Activated B cell treated with CpG ODN at 0.5 μM for 24 hours (primary cell): ENCODE measurements at regions of chr15 and their contacts with region 1.

Region 1: DNA sequence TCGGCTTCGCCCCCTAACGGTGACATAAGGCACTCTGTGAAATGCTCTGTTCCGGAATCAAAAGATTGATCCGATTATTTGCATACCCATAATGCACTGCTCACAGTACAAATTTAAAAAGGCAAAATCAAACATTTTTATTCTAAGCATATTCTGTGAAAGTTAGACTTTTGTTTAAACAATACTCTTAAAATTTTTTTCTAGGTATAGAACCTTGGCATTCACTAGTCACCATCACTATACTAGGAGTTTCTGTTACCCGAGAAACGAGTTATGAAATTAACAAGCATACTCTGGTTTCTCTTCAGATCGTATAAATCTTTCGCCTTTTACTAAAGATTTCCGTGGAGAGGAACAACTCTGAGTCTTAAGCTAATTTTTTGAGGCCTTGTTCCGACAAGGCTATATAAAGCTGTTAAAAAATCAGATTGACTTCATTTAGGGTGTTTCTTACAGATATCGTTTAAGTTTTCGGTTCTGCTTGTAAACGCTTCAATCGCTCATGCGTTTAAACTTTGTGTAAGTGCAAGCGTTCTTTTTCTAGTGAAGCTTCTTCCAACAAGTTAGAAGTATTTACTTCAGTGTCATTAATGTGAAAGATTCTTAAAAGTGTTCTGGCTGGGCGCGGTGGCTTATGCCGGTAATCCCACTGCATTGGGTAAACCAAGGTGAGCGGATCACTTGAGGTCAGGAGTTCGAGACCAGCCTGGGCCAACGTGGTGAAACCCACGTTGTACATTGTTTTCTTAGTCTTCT is at the start of gene RNU5B-1:
- DNase-seq: peak; percentile 71
- ATAC-seq: peak; percentile 78
- H3K4me3 Mint-ChIP-seq: peak within 1 kb of the TSS; percentile 96
- H3K27ac Mint-ChIP-seq: peak within 1 kb of the TSS; percentile 97
- H3K4me1 Mint-ChIP-seq: peaks cover 37% of the 10 kb centered on the region
- H3K27me3 Mint-ChIP-seq: no peaks in the 10 kb centered on the region
- CTCF ChIP-seq: no peak
- total RNA-seq, gene RNU5B-1: 32.5 TPM in 1 of 2 replicates, not detected in the other

Region 2: GRCh38 chr15:64387562-64388168 is 916.9 kb before region 1 on chr15 and contains the start of gene TRIP4:
- CTCF ChIA-PET with region 1: no interaction called
- POLR2A ChIA-PET with region 1: no interaction called
- intact Hi-C with region 1: loop called (anchors 10 kb)
- DNase-seq: peak; percentile 92
- ATAC-seq: peak; percentile 100
- H3K4me3 Mint-ChIP-seq: peak within 1 kb of the TSS; percentile 98
- H3K27ac Mint-ChIP-seq: peak within 1 kb of the TSS; percentile 94
- H3K4me1 Mint-ChIP-seq: peaks cover 25% of the 10 kb centered on the region
- H3K27me3 Mint-ChIP-seq: no peaks in the 10 kb centered on the region
- CTCF ChIP-seq: no peak
- total RNA-seq, gene TRIP4: 26.3 and 35.0 TPM in 2 replicates

Region 3: DNA sequence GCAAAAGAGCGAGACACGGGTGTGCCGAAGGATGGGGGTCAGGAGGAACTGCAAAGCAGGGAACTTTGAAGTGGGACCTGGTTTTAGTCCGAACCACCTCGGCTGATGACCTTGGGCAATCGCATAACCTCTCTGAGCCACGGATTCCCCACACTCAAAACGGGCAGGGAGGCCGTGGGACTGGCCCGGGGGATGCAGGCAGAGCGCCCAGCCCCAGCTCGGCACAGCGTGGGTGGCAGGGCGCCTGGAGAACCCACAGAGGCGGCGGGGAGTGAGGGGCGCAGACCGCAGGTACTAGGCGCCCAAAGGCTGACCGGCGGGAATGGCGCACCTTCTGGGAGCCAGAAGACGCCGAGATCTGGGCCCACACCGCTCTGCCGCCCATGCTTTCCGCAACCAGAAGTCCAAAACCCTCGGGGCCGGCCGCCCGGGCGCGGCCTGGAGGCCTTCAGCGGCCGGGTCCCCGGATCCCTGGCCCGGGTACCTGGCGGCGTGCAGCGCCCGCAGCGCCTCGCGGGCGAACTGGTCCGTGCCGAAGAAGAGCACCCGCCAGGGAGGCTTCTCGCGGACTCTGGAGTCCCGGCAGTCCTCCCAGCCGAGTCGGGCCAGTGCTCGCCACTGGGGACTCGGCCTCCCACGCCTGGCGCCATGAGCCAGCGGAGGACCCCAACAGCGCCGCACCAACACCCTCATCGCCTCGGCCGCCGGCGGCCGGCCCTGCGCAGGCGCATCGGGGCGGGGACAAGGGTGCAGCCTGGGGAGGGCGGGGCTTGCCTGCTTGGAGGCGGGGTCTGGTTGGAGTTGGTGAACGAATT is 275.4 kb before region 1 on chr15 and contains the start of gene MTFMT:
- CTCF ChIA-PET with region 1: interaction called, 4 read pairs
- POLR2A ChIA-PET with region 1: interaction called, 5 read pairs
- intact Hi-C with region 1: loop called (anchors 1 kb)
- DNase-seq: peak; percentile 91
- ATAC-seq: peak; percentile 96
- H3K4me3 Mint-ChIP-seq: peak within 1 kb of the TSS; percentile 85
- H3K27ac Mint-ChIP-seq: peak within 1 kb of the TSS; percentile 13
- H3K4me1 Mint-ChIP-seq: peaks cover 23% of the 10 kb centered on the region
- H3K27me3 Mint-ChIP-seq: peaks cover 7% of the 10 kb centered on the region
- CTCF ChIP-seq: no peak
- total RNA-seq, gene MTFMT: 9.8 and 13.5 TPM in 2 replicates

Region 4: GRCh38 chr15:65133548-65134200 is 170.9 kb before region 1 on chr15 and contains the start of gene PDCD7:
- CTCF ChIA-PET with region 1: no interaction called
- POLR2A ChIA-PET with region 1: interaction called, 5 read pairs
- intact Hi-C with region 1: loop called (anchors 1 kb)
- DNase-seq: peak; percentile 70
- ATAC-seq: peak; percentile 95
- H3K4me3 Mint-ChIP-seq: peak within 1 kb of the TSS; percentile 89
- H3K27ac Mint-ChIP-seq: peak within 1 kb of the TSS; percentile 84
- H3K4me1 Mint-ChIP-seq: peaks cover 28% of the 10 kb centered on the region
- H3K27me3 Mint-ChIP-seq: no peaks in the 10 kb centered on the region
- CTCF ChIP-seq: no peak
- total RNA-seq, gene PDCD7: 29.3 and 30.7 TPM in 2 replicates

Region 5: GRCh38 chr15:65286704-65287519 is 17.7 kb before region 1 on chr15 and contains the start of gene PARP16:
- CTCF ChIA-PET with region 1: interaction called, 4 read pairs
- POLR2A ChIA-PET with region 1: interaction called, 186 read pairs
- intact Hi-C with region 1: loop called (anchors 1 kb)
- DNase-seq: peak; percentile 94
- ATAC-seq: peak; percentile 96
- H3K4me3 Mint-ChIP-seq: peak within 1 kb of the TSS; percentile 85
- H3K27ac Mint-ChIP-seq: peak within 1 kb of the TSS; percentile 90
- H3K4me1 Mint-ChIP-seq: peaks cover 27% of the 10 kb centered on the region
- H3K27me3 Mint-ChIP-seq: no peaks in the 10 kb centered on the region
- CTCF ChIP-seq: no peak
- total RNA-seq, gene PARP16: 11.2 and 11.5 TPM in 2 replicates

Region 6: GRCh38 chr15:65318870-65319356 is 14.3 kb after region 1 on chr15:
- CTCF ChIA-PET with region 1: interaction called, 5 read pairs
- POLR2A ChIA-PET with region 1: interaction called, 22 read pairs
- intact Hi-C with region 1: no loop called
- DNase-seq: peak; percentile 56
- ATAC-seq: peak; percentile 100
- H3K4me3 Mint-ChIP-seq: no peak overlapping the region
- H3K27ac Mint-ChIP-seq: peak overlapping the region; percentile 24
- H3K4me1 Mint-ChIP-seq: no peaks in the 10 kb centered on the region
- H3K27me3 Mint-ChIP-seq: peaks cover 23% of the 10 kb centered on the region
- CTCF ChIP-seq: peak; percentile 91

Region 7: DNA sequence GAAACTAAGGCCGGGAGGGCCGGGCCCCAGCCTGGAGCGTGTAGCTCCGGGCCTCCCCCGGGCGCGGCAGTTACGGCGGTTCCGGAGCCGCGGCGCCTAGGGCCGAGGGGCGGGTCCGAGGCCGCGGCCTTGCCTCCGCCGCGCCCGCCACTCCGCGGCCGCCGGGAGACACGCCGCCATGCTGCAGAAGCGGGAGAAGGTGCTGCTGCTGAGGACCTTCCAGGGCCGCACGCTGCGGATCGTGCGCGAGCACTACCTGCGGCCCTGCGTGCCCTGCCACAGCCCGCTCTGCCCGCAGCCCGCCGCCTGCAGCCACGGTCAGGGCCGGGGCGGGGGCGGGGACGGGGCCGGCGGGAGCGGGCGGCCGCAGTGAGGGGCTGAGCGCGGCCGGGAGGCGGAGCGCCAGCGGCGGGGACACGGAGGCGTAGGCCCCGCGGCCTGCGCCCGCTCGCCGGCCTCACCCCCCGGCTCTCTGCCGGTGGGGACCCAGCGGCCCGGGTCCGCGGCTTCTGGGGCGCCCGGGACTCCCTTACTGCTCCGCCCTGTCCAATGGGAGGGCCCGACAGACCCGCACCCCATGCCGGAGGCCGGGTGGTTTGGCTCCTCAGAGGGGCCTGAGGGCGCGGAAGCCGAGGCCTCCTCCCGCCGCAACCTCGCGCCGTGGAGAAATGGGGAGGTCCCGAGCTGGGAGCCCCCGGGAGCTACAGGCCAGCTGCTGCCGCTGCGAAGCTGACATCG is 989.0 kb after region 1 on chr15 and contains the start of gene DIS3L:
- CTCF ChIA-PET with region 1: no interaction called
- POLR2A ChIA-PET with region 1: interaction called, 4 read pairs
- intact Hi-C with region 1: loop called (anchors 10 kb)
- DNase-seq: peak; percentile 74
- ATAC-seq: peak; percentile 82
- H3K4me3 Mint-ChIP-seq: peak within 1 kb of the TSS; percentile 82
- H3K27ac Mint-ChIP-seq: peak within 1 kb of the TSS; percentile 89
- H3K4me1 Mint-ChIP-seq: peaks cover 28% of the 10 kb centered on the region
- H3K27me3 Mint-ChIP-seq: no peaks in the 10 kb centered on the region
- CTCF ChIP-seq: no peak
- total RNA-seq, gene DIS3L: 23.8 and 27.2 TPM in 2 replicates